Heart left ventricle (tissue), 16 donors: ENCODE measurements at regions of chr6 and their contacts with region 1.

Region 1: GRCh38 chr6:11064836-11065235 is 20.7 kb upstream of the ELOVL2 start:
- DNase-seq: no peak
- ATAC-seq: no peak
- H3K4me3 ChIP-seq: no peak overlapping the region
- H3K27ac ChIP-seq: no peak overlapping the region
- H3K4me1 ChIP-seq: no peaks in the 10 kb centered on the region
- H3K27me3 ChIP-seq: no peaks in the 10 kb centered on the region
- CTCF ChIP-seq: no peak
- POLR2A ChIP-seq: no peak

Region 2: DNA sequence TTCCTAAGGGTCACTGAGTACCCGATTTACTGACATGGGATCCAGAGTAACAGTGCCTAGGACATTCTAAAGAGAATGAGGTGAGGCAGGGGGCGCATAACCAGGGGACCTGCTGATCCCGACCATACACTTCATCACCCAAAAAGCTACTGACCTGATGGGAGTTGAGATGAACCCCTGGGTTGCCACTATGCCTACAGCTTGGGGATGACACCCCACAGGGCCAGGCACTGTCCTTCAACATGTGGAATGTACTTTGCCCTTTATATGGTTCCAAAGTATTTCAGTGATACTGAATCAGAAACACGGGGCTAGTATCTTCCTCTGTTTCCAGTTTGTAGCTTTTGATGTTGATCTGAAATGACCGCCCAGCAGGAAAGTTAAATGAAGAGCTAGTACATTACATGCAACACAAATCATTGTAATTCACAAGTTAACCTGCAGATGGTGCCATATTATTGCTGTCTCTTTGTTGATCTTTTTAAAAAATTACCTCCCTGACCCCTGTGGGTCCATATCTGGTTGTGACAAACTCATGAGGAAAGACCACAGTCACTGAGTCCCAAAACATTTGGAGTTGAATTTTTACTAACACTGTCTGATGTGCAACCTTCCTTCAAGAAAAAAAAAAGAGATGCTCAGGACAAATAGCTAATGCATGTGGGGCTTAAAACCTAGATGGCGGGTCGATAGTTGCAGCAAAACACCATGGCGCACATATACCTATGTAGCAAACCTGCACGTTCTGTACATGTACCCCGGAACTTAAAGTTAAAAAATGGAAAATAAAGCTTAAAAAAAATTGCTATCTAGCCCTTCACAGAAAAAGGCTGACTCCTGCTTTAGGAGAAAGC is 586.4 kb before region 1 on chr6:
- intact Hi-C with region 1: loop called in 9 of 10 experiments (anchors 5 to 10 kb)
- DNase-seq: no peak
- ATAC-seq: no peak
- H3K4me3 ChIP-seq: no peak overlapping the region
- H3K27ac ChIP-seq: no peak overlapping the region
- H3K4me1 ChIP-seq: no peaks in the 10 kb centered on the region
- H3K27me3 ChIP-seq: no peaks in the 10 kb centered on the region
- CTCF ChIP-seq: peak; percentile 41 to 62 (median 58)
- POLR2A ChIP-seq: no peak

Region 3: GRCh38 chr6:10487668-10488327 is 577.0 kb before region 1 on chr6:
- intact Hi-C with region 1: loop called in 1 of 10 experiments (anchors 10 kb)
- DNase-seq: no peak
- ATAC-seq: peak in 1 of 4 donors; percentile 33
- H3K4me3 ChIP-seq: peak overlapping the region in 2 of 12 donors; percentile 19 to 22
- H3K27ac ChIP-seq: no peak overlapping the region
- H3K4me1 ChIP-seq: no peaks in the 10 kb centered on the region
- H3K27me3 ChIP-seq: peaks cover 0 to 16% (median 0%) of the 10 kb centered on the region in 9 donors
- CTCF ChIP-seq: no peak
- POLR2A ChIP-seq: no peak

Region 4: GRCh38 chr6:10847684-10848083 is 217.2 kb before region 1 on chr6:
- intact Hi-C with region 1: loop called in 3 of 10 experiments (anchors 5 to 10 kb)
- DNase-seq: no peak
- ATAC-seq: no peak
- H3K4me3 ChIP-seq: no peak overlapping the region
- H3K27ac ChIP-seq: no peak overlapping the region
- H3K4me1 ChIP-seq: no peaks in the 10 kb centered on the region
- H3K27me3 ChIP-seq: no peaks in the 10 kb centered on the region
- CTCF ChIP-seq: peak in 5 of 12 donors; percentile 8 to 39 (median 29)
- POLR2A ChIP-seq: no peak

Region 5: DNA sequence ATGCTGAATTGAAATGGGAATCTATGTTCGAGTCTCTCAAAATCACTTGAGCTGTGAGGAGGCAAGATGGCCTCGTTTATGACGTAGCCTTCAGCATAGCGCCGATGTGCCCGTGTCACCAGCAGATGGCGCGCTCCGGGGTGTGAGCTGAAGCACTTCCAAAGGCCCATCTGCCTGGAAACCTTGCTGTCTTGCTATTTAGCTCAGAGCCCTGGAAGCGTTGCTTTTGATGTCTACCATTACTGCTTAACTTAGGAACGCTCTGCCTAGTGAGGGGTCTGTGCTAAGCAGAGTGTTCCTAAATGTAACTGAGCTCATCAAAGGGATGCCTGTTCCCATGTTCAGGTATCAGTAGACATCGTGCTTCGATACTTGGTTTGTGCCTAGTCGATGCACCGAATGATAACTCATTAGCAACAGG is 110.2 kb before region 1 on chr6:
- intact Hi-C with region 1: loop called (anchors 1 to 5 kb)
- DNase-seq: peak; percentile 59 to 84 (median 67)
- ATAC-seq: peak in 3 of 4 donors; percentile 68 to 72 (median 71)
- H3K4me3 ChIP-seq: no peak overlapping the region
- H3K27ac ChIP-seq: no peak overlapping the region
- H3K4me1 ChIP-seq: no peaks in the 10 kb centered on the region
- H3K27me3 ChIP-seq: no peaks in the 10 kb centered on the region
- CTCF ChIP-seq: peak; percentile 50 to 81 (median 68)
- POLR2A ChIP-seq: no peak

Region 6: DNA sequence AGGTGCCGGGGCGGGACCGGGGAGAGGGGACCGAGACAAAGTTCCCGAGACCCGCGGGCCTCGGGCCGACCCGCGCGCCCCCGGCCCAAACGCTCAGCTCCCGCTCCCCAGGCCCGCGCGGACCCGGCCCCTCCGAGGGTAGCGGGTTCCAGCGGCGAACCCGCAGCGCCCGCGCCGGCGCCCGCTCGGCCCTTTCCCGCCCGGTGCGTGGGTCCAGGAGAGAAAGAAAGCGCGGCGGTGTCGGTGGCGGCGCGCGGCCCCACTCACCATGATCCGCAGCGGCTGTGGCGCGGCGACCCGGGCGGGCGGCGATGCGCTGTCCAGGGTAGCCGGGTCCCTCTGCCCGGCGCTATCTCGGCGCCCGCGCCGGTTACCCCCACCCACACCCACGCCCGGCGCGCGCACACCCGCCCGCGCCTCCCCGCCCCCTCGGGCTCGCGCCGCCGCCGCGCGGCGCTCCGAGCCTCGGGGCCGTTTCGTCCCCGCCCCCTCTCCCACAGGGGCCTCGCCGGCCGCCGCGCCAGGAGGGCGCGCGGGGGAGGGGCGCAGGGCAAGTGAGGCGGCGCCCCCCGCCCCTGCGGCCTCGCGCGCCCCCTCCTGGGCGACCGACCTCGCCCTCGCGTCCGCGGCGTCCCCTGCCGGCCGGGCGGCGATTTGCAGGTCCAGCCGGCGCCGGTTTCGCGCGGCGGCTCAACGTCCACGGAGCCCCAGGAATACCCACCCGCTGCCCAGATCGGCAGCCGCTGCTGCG is 20.7 kb before region 1 on chr6 and contains the start of gene ELOVL2:
- intact Hi-C with region 1: no loop called
- DNase-seq: peak; percentile 32 to 73 (median 44)
- ATAC-seq: peak in 3 of 4 donors; percentile 67 to 92 (median 92)
- H3K4me3 ChIP-seq: peak within 1 kb of the TSS; percentile 50 to 83 (median 58)
- H3K27ac ChIP-seq: peak within 1 kb of the TSS in 3 of 12 donors; percentile 32 to 64 (median 46)
- H3K4me1 ChIP-seq: peaks cover 0 to 14% (median 0%) of the 10 kb centered on the region in 12 donors
- H3K27me3 ChIP-seq: peaks cover 7 to 91% (median 47%) of the 10 kb centered on the region in 9 donors
- CTCF ChIP-seq: peak in 11 of 12 donors; percentile 29 to 71 (median 55)
- POLR2A ChIP-seq: no peak
- total RNA-seq, gene ELOVL2: 1.1 to 6.1 (median 1.7) TPM